ENCODE measurements at regions of chr1 and their contacts with region 1.

Region 1: DNA sequence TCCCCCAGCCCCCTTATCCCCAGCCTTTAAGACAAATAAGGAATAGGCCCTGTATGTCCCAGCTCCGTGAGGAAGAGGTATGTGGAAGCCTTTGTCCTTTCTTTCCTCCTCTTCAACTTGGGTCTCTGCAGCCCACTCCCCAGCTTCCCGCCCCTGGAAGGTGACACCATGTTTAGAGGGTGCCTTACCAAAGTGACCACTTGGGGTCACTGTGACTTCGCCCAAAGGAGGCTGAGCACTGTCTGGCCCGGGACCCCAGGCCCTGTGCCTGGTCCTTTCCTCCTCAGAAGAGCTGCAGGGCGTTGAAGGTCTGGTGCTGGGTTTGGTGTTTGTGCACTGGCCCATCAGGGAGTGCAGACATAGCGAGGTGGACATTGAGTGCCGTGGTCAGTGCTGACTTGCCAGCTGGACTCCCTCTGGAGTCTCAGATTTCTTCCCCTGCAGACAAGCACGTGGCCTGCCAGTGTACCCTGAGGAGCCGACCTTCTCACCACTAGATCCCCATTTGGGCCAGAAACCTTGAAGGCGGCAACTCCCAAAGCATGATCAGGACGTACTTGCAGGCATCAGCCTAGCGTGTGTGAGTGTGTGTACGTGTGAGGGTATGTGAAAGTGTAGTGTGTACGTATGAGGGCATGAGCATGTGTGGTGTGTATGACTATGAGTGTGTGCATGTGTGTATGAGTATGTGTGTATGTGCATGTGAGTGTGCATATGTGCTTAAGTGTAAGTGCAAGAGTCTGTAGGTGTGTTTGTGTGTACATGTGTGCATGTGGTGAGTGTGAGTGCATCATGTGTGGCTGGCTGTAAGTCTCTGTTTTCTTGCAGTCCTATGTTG is 181.4 kb upstream of the KIAA0040 start:
- DNase-seq: no peak

Region 2: GRCh38 chr1:175443332-175443731 is 69.3 kb after region 1 on chr1:
- intact Hi-C with region 1: no loop called
- DNase-seq: no peak

Region 3: DNA sequence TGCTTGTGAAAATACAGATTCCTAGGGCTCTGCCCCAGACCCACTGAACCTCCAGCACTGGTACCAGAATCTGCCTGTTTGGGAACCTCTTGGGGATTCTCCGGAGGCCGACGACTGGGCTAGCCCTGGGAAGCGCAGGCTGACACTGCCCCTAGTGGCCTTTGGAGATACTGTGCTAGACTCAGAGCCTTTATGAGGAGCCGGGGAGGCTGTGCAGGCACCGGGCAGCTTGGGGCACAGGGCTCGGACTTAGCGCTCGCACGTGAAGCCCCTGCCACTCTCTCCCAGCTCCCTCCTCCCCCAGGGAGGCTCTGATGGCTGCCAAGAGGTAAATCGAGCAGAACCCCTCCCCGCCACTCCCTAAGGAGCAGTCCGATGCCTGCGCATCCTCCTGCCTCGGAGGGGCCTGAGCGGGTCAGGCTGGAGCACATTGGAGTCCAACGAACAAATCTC is 514.0 kb after region 1 on chr1:
- intact Hi-C with region 1: loop called (anchors 5 kb)
- DNase-seq: peak; percentile 76

Region 4: GRCh38 chr1:176073524-176074157 is 699.6 kb after region 1 on chr1:
- intact Hi-C with region 1: loop called (anchors 5 kb)
- DNase-seq: no peak

Measured in cardiac septum (tissue), 1 donor.